Endothelial cell of umbilical vein (primary cell): ENCODE measurements at regions of chr10 and their contacts with region 1.

Region 1: DNA sequence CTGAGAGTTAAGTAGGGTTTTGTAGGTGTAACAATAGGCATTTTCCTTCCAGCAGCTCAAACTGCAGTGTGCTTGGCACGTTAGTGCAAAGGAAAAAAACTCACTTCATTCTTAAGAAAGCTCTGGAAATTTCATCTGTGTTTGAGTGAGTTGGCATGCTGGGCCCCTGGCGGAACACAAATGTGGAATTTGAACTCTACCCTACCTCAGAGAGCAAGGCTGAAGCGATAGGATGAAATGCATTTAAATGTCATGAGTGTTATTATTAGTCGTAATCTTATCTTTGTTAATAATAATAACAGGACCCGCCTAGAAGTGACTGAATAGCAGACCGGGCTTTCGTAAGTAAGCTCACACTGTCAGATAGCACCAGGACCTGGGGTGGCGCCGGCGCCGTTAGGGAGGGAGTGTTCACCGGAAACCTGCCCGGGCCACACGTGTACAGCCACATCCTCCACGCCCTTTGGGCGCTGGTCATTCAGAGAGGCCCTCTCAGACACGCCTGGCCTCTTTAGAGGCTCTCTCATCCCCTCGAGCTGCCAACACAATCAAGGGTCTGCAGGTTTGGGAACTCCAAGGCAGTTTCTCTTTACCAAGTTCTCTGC is 63.5 kb downstream of the GRK5 start:
- DNase-seq: no peak
- H3K4me3 ChIP-seq: no peak overlapping the region
- H3K27ac ChIP-seq: peak overlapping the region; percentile 77
- H3K4me1 ChIP-seq: peaks cover 34% of the 10 kb centered on the region
- H3K27me3 ChIP-seq: no peaks in the 10 kb centered on the region
- CTCF ChIP-seq: no peak
- POLR2A ChIP-seq: peak; percentile 56

Region 2: GRCh38 chr10:119246862-119247549 is 23.9 kb before region 1 on chr10:
- CTCF ChIA-PET with region 1: interaction called, 20 read pairs
- POLR2A ChIA-PET with region 1: interaction called, 6 read pairs
- dilution Hi-C with region 1: no loop called
- intact Hi-C with region 1: loop called (anchors 1 kb)
- DNase-seq: peak; percentile 90
- H3K4me3 ChIP-seq: no peak overlapping the region
- H3K27ac ChIP-seq: peak overlapping the region; percentile 54
- H3K4me1 ChIP-seq: peaks cover 40% of the 10 kb centered on the region
- H3K27me3 ChIP-seq: no peaks in the 10 kb centered on the region
- CTCF ChIP-seq: no peak
- POLR2A ChIP-seq: no peak

Region 3: DNA sequence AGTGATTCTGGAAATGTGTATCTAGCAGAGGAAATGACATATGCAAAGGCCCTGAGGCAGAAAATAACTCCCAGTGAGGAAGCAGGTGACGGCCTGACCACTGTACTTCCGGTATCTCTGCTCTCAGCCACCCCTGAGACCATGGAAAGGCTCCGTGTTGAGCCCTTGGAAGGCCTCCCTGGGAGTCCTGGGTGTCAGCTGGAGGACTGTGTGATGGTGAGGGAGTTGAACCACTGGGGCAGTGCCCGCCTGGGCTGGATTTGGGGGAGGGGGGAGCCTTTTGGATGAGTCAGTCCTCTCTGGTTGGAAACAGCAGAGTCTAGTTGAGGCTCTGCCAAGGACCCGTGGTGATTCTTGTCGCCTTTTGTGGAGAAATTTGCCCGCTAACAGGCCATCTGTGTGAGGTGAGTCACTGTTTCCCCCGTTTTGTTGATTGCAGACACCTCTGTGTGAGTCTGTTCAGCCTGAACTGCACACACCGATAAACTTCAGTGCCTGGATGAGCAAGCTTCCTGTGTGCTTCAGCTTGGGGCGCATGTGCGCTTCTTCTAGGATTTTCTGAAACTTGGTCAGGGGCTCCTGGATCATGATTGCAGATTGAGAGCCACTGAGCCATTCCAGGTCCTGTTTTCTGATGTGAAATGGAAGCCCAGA is 35.1 kb after region 1 on chr10:
- CTCF ChIA-PET with region 1: interaction called, 6 read pairs
- POLR2A ChIA-PET with region 1: no interaction called
- dilution Hi-C with region 1: no loop called
- intact Hi-C with region 1: loop called (anchors 1 kb)
- DNase-seq: peak; percentile 99
- H3K4me3 ChIP-seq: no peak overlapping the region
- H3K27ac ChIP-seq: peak overlapping the region; percentile 93
- H3K4me1 ChIP-seq: peaks cover 49% of the 10 kb centered on the region
- H3K27me3 ChIP-seq: no peaks in the 10 kb centered on the region
- CTCF ChIP-seq: no peak
- POLR2A ChIP-seq: peak; percentile 29

Region 4: GRCh38 chr10:119341459-119342301 is 70.8 kb after region 1 on chr10:
- CTCF ChIA-PET with region 1: interaction called, 4 read pairs
- POLR2A ChIA-PET with region 1: no interaction called
- dilution Hi-C with region 1: no loop called
- intact Hi-C with region 1: loop called (anchors 2 kb)
- DNase-seq: peak; percentile 44
- H3K4me3 ChIP-seq: no peak overlapping the region
- H3K27ac ChIP-seq: no peak overlapping the region
- H3K4me1 ChIP-seq: peaks cover 21% of the 10 kb centered on the region
- H3K27me3 ChIP-seq: no peaks in the 10 kb centered on the region
- CTCF ChIP-seq: no peak
- POLR2A ChIP-seq: no peak

Region 5: DNA sequence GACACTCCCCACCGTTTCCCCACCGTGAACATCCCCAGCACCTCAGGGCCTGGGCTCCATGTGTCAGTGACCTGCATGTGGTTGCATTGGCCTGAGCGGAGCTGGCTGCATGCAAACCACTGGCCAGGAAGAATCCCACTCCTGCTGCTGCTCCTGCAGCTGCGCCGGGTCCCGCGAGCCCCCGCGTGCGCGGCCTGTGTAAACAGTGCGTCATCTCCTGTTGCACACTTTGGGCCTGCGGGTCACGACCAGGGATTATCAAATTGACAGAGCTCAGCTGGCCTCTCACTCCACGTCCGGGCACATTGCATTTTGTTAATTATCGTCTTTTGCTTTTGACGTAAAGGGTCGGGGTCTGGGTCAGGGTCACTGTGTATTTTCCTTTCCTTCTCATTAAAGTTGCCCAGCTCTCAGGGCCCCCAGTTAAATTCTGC is 139.0 kb after region 1 on chr10:
- CTCF ChIA-PET with region 1: interaction called, 15 read pairs
- POLR2A ChIA-PET with region 1: no interaction called
- dilution Hi-C with region 1: no loop called
- intact Hi-C with region 1: loop called (anchors 1 kb)
- DNase-seq: peak; percentile 94
- H3K4me3 ChIP-seq: no peak overlapping the region
- H3K27ac ChIP-seq: peak overlapping the region; percentile 85
- H3K4me1 ChIP-seq: peaks cover 44% of the 10 kb centered on the region
- H3K27me3 ChIP-seq: no peaks in the 10 kb centered on the region
- CTCF ChIP-seq: no peak
- POLR2A ChIP-seq: peak; percentile 66